Activated CD4-positive, alpha-beta T cell treated with anti-CD3 and anti-CD28 coated beads, Interleukin-2, amount 10 ng/mL, durations not matched to agents 24 days and 14 days (primary cell): ENCODE measurements at regions of chr10 and their contacts with region 1.

Region 1: DNA sequence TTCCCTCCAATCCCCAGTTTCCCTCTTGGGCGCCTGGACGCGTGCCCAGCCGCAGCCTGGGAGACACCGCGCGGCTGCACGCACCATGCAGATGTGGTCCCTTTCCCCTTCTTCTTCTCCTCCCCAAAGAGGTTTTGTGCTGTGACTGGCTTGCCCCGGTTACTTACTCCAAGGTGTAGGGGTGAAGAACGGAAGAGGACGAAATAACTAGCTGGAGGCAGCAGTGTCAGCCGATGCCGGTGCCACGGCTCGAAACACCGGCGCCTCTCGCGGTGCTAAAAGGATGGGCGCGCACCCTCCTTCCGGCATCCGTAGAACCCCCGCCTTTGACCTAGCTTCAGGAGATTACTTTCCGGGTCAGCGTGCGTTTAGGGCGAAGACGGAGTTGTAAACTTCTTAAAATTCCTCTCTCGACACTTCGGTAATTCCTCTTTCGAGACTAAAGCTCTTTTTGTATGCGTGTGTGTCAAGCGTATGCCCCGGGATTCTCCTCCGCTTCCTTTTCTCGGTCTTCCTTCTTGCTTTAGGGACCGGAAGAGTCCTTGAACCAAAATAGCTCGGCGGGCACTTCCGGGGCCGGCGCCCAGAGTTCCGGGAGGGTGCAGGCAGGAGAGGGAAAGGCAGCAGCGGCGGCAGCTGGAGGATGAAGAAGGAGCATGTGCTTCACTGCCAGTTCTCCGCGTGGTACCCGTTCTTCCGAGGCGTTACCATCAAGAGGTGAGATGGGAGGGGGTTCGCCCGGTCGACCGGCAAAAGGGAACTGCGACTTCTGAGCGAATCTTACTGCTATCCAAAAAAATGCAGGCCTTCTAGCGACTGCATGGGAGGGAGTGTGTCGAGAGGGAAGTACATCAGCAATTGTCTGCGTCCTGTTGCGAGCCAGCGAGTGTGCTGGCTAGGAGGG is at the starts of genes CDC123 and NUDT5:
- DNase-seq: peak; percentile 96
- H3K4me3 Mint-ChIP-seq: peak within 1 kb of the TSS; percentile 98
- H3K27ac Mint-ChIP-seq: peak within 1 kb of the TSS; percentile 99
- H3K4me1 Mint-ChIP-seq: peaks cover 40% of the 10 kb centered on the region
- H3K27me3 Mint-ChIP-seq: no peaks in the 10 kb centered on the region
- total RNA-seq, gene CDC123: 184 and 185 TPM in 2 replicates
- total RNA-seq, gene NUDT5: 123 and 128 TPM in 2 replicates

Region 2: DNA sequence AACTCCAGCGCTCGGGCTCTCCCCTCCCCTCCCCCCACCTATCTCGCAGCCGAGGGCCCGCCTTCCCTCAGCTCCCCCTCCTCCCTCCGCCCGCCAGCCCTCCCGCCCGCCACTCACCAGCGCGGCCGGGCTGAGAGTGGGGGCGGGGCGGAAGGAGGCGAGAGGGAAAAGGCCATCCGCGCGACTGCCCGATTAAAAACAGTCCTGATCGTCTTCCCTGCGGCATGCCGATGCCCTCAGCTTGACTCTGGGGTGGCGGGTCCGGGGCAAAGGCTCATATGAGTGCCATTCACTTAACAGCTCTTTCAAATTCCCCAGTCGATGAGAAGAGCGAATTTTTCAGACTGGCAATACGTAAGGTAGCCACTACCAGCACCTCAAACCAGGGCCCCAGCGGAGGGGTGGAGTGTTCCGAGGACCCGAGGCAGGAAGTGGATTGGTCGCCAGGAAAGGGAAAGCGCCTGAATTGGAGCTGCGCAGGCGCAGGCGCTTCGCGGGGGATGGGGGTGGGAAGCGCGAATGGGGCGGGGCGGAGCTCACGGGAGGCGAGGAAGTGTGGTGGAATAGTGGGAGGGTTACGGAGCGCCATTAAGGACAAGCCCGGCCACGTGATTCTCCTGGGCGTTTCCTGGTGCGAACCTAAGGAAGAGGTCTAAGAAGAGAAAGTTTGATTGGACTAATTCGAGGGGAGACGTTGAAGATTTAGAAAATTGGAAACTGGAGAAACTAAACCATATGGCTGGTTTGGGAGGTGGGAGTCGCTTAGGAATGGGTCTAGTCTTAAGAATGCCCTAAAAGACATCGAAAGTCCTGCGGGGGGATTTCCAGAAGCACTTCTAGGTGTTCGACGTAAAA is 152.8 kb before region 1 on chr10 and contains the start of gene UPF2:
- intact Hi-C with region 1: loop called (anchors 2 kb)
- DNase-seq: peak; percentile 98
- H3K4me3 Mint-ChIP-seq: peak within 1 kb of the TSS; percentile 95
- H3K27ac Mint-ChIP-seq: peak within 1 kb of the TSS; percentile 100
- H3K4me1 Mint-ChIP-seq: peaks cover 32% of the 10 kb centered on the region
- H3K27me3 Mint-ChIP-seq: peaks cover 4% of the 10 kb centered on the region
- total RNA-seq, gene UPF2: 38.9 and 41.4 TPM in 2 replicates

Region 3: DNA sequence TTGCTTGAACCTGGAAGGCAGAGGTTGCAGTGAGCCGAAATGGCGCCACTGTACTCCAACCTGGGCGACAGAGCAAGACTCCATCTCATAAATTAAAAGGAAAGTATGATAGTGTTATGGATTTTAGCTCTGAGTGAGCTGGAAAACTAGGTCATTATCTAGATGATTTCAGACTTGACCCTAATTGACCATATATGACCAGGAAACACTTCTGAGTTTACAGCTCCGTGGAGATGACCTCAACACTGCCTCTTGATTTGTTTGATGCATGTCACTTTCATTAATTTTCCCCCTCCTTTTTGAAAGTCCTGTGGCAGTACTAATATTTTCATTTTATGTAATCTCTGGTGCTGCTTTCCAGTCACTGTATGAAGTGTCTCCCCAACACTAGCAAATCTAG is 74.2 kb before region 1 on chr10:
- intact Hi-C with region 1: loop called (anchors 2 kb)
- DNase-seq: no peak
- H3K4me3 Mint-ChIP-seq: peak overlapping the region; percentile 79
- H3K27ac Mint-ChIP-seq: peak overlapping the region; percentile 97
- H3K4me1 Mint-ChIP-seq: peaks cover 27% of the 10 kb centered on the region
- H3K27me3 Mint-ChIP-seq: no peaks in the 10 kb centered on the region

Region 4: GRCh38 chr10:12129222-12130111 is 66.4 kb before region 1 on chr10 and contains the start of gene SEC61A2:
- intact Hi-C with region 1: loop called (anchors 1 kb)
- DNase-seq: peak; percentile 100
- H3K4me3 Mint-ChIP-seq: peak within 1 kb of the TSS; percentile 85
- H3K27ac Mint-ChIP-seq: peak within 1 kb of the TSS; percentile 90
- H3K4me1 Mint-ChIP-seq: peaks cover 30% of the 10 kb centered on the region
- H3K27me3 Mint-ChIP-seq: no peaks in the 10 kb centered on the region
- total RNA-seq, gene SEC61A2: 13.3 and 21.2 TPM in 2 replicates

Region 5: DNA sequence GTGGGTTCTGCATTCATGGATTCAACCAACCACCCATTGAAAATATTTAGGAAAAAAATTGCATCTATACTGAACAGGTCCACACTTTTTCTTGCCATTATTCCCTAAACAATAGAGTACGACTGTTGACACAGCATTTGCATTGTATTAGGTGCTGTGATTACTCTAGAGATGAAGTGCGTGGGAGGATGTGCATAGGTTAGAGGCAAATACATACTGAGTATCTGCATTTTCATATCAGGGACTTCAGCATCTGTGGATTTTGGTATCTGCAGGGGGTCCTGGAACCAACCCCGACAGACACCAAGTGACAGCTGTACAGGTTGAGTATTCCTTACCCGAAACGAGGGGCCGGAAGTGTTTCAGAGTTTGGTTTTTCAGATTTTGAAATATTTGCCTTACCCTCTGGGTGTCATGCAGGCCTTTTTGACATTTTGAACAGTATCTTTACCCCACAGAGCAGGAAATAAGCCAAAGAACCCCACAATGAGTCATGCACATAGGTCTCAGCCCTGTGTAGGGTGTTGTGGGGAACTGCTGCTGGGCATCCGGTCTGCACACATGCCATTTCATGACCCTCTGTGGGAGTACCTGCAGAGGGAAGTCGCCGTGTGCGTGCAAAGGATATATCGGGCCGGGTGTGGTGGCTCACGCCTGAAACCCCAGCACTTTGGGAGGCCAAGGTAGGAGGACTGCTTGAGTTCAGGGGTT is 14.6 kb before region 1 on chr10:
- intact Hi-C with region 1: loop called (anchors 1 kb)
- DNase-seq: peak; percentile 90
- H3K4me3 Mint-ChIP-seq: peak overlapping the region; percentile 39
- H3K27ac Mint-ChIP-seq: peak overlapping the region; percentile 89
- H3K4me1 Mint-ChIP-seq: peaks cover 28% of the 10 kb centered on the region
- H3K27me3 Mint-ChIP-seq: no peaks in the 10 kb centered on the region